ENCODE measurements at regions of chr1 and their contacts with region 1.

Region 1: GRCh38 chr1:31564134-31564989 is 12.0 kb upstream of the TINAGL1 start:
- DNase-seq: peak; percentile 65
- H3K4me3 Mint-ChIP-seq: no peak overlapping the region
- H3K27ac Mint-ChIP-seq: no peak overlapping the region
- H3K4me1 Mint-ChIP-seq: no peaks in the 10 kb centered on the region
- H3K27me3 Mint-ChIP-seq: peaks cover 21% of the 10 kb centered on the region

Region 2: DNA sequence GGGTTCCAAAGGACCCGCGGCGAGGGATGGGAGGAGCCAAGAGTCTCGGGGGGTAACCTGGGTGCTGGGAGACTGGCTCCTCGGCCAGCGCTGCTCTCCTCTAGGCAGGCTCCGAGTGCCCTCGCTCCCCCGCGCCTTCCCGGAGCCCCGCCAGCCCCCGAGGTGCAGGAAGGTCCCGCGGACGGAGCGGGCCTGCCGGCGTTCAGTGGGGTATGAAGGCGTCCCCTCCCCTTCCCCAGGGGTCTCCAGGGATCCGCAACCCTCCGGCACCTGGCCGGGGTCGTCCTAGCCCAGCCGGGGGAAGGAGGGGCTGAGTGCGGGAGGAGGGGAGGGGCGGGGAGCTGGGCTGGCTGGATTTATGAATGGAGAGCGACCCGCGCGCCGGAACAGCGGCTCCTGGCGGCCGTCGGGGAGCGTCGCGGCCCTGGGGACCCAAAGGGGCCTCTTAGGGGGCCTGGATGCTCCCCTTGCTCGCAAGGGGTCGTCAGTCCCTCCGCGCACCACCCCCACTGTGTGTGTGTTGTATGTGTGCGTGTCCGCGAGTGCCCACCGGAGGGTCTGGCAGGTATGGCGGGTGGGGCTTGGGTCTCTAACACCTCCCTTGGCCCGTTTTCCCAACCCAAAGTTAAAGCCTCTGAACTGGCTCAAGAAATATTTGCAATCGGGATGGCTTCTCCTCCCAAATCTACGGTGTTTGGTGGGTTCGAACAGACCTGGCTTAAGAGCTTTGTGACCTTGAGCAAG is 53.7 kb after region 1 on chr1:
- CTCF ChIA-PET with region 1: interaction called, 26 read pairs
- POLR2A ChIA-PET with region 1: no interaction called
- intact Hi-C with region 1: loop called (anchors 1 kb)
- DNase-seq: peak; percentile 53
- H3K4me3 Mint-ChIP-seq: no peak overlapping the region
- H3K27ac Mint-ChIP-seq: no peak overlapping the region
- H3K4me1 Mint-ChIP-seq: peaks cover 3% of the 10 kb centered on the region
- H3K27me3 Mint-ChIP-seq: peaks cover 24% of the 10 kb centered on the region

Region 3: DNA sequence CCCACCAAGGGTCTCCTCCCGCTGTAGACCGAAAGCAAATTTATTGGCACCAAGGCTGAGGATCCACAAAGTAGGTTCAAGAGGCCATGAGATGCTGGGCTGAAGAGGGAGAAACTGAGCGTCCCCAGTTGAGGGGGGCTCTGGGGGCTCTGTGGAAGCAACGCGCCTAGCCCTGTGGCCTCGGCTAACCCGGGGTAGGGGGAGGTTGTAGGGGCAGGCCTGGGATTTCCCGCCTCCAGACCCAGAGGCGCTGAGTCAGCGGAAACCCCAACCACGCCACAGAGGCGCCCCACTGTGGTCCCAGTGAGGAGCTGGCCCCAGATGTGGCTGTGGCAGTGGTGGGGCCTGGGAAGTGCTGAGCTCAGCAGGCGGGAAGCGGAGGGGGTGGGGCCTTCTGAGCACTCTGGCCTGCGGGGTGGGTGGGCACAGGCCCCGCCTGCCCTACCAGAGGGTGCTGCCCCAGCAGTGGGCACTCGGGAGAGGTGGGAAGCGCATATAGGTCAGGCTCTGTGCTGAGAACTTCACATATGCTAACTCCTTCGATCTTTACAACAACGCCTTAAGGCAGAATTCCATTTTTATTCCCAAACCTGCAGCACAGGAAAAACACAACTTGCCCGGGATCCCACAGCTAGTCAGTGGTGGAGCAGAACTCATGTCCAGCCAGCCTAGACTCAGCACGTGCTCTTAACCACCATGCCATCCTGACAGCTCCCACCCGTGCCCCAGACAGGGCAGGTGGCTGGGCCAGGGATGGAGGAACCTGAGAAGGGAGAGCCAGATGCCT is 140.9 kb after region 1 on chr1:
- CTCF ChIA-PET with region 1: interaction called, 3 read pairs
- POLR2A ChIA-PET with region 1: no interaction called
- intact Hi-C with region 1: loop called (anchors 10 kb)
- DNase-seq: peak; percentile 88
- H3K4me3 Mint-ChIP-seq: peak overlapping the region; percentile 17
- H3K27ac Mint-ChIP-seq: no peak overlapping the region
- H3K4me1 Mint-ChIP-seq: peaks cover 37% of the 10 kb centered on the region
- H3K27me3 Mint-ChIP-seq: peaks cover 30% of the 10 kb centered on the region